Naive thymus-derived CD4-positive, alpha-beta T cell (primary cell): ENCODE measurements at regions of chr13 and their contacts with region 1.

Region 1: GRCh38 chr13:28718543-28719226 is at the start of gene SLC46A3:
- DNase-seq: peak; percentile 94 to 97 (median 96)
- ATAC-seq: peak; percentile 99
- H3K4me3 ChIP-seq: peak within 1 kb of the TSS; percentile 81
- H3K4me3 Mint-ChIP-seq: peak within 1 kb of the TSS; percentile 89 to 97 (median 95)
- H3K27ac ChIP-seq: peak within 1 kb of the TSS; percentile 78
- H3K27ac Mint-ChIP-seq: peak within 1 kb of the TSS; percentile 90 to 97 (median 95)
- H3K4me1 ChIP-seq: peaks cover 11 to 14% of the 10 kb centered on the region in 2 donors
- H3K4me1 Mint-ChIP-seq: peaks cover 27 to 48% (median 38%) of the 10 kb centered on the region in 7 donors
- H3K27me3 ChIP-seq: no peaks in the 10 kb centered on the region
- H3K27me3 Mint-ChIP-seq: peaks cover 0 to 10% (median 0%) of the 10 kb centered on the region in 5 donors
- total RNA-seq, gene SLC46A3: 11.1 to 23.6 (median 12.0) TPM

Region 2: DNA sequence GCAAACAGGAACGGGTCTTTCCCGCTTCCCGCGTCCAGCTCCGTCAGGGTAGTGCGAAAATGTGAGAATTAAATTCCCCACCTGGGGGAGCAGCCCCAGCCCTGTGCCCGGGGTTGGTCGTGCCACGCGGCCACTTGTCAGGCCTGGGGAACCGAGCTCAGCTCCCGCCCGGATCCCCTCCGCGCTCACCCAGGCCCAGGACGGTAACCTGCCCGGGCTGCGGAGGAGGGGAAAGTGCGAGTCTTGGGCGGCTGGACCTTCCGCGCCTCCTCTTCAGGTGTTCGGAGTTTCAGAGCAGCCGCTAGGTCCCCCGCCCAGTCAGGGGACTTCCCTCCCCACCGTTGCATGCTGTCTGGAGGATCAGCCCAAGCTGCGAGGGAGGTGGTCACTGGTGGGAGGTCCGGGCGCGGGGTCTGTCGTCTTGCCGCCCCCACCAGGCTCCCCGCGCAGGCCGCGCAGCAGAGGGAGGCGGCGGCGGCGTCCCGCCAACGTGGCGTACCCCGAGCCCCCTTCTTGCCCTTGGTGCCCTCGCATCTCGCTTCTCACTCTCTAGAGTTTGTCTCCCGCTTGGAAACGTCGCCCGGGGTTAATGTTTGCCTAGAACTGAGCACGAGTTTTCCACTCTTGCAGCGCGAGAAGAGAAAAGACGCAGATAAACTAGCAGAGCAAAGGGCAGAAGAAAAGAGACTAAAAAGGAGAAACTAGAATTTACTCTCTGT is 738.2 kb before region 1 on chr13:
- CTCF ChIA-PET with region 1: no interaction called
- POLR2A ChIA-PET with region 1: no interaction called
- intact Hi-C with region 1: no loop called
- DNase-seq: no peak
- ATAC-seq: no peak
- H3K4me3 ChIP-seq: no peak overlapping the region
- H3K4me3 Mint-ChIP-seq: peak overlapping the region in 8 of 10 donors; percentile 17 to 68 (median 40)
- H3K27ac ChIP-seq: no peak overlapping the region
- H3K27ac Mint-ChIP-seq: no peak overlapping the region
- H3K4me1 ChIP-seq: no peaks in the 10 kb centered on the region
- H3K4me1 Mint-ChIP-seq: peaks cover 10 to 33% (median 25%) of the 10 kb centered on the region in 7 donors
- H3K27me3 ChIP-seq: peaks cover 13 to 17% of the 10 kb centered on the region in 2 donors
- H3K27me3 Mint-ChIP-seq: peaks cover 73 to 84% (median 77%) of the 10 kb centered on the region in 5 donors

Region 3: GRCh38 chr13:28355822-28356371 is 362.8 kb before region 1 on chr13:
- CTCF ChIA-PET with region 1: no interaction called
- POLR2A ChIA-PET with region 1: no interaction called
- intact Hi-C with region 1: loop called in 1 of 2 experiments (anchors 5 kb)
- DNase-seq: peak in 2 of 9 donors; percentile 2 to 20
- ATAC-seq: peak; percentile 65
- H3K4me3 ChIP-seq: no peak overlapping the region
- H3K4me3 Mint-ChIP-seq: peak overlapping the region in 3 of 10 donors; percentile 35 to 77 (median 39)
- H3K27ac ChIP-seq: no peak overlapping the region
- H3K27ac Mint-ChIP-seq: peak overlapping the region in 1 of 9 donors; percentile 84
- H3K4me1 ChIP-seq: peaks cover 0 to 12% of the 10 kb centered on the region in 2 donors
- H3K4me1 Mint-ChIP-seq: peaks cover 9 to 47% (median 31%) of the 10 kb centered on the region in 7 donors
- H3K27me3 ChIP-seq: no peaks in the 10 kb centered on the region
- H3K27me3 Mint-ChIP-seq: peaks cover 0 to 4% (median 0%) of the 10 kb centered on the region in 5 donors

Region 4: GRCh38 chr13:28658796-28659620 is 59.7 kb before region 1 on chr13 and contains the start of gene POMP:
- CTCF ChIA-PET with region 1: no interaction called
- POLR2A ChIA-PET with region 1: interaction called, 20 read pairs
- intact Hi-C with region 1: loop called (anchors 1 kb)
- DNase-seq: peak; percentile 83 to 96 (median 93)
- ATAC-seq: peak; percentile 95
- H3K4me3 ChIP-seq: peak within 1 kb of the TSS; percentile 86
- H3K4me3 Mint-ChIP-seq: peak within 1 kb of the TSS; percentile 88 to 100 (median 98)
- H3K27ac ChIP-seq: peak within 1 kb of the TSS; percentile 96
- H3K27ac Mint-ChIP-seq: peak within 1 kb of the TSS; percentile 94 to 99 (median 99)
- H3K4me1 ChIP-seq: peaks cover 25 to 29% of the 10 kb centered on the region in 2 donors
- H3K4me1 Mint-ChIP-seq: peaks cover 38 to 84% (median 69%) of the 10 kb centered on the region in 7 donors
- H3K27me3 ChIP-seq: no peaks in the 10 kb centered on the region
- H3K27me3 Mint-ChIP-seq: no peaks in the 10 kb centered on the region
- total RNA-seq, gene POMP: 18.8 to 97.0 (median 21.2) TPM

Region 5: GRCh38 chr13:28707629-28708427 is 10.9 kb before region 1 on chr13:
- CTCF ChIA-PET with region 1: no interaction called
- POLR2A ChIA-PET with region 1: interaction called, 4 read pairs
- intact Hi-C with region 1: loop called in 1 of 2 experiments (anchors 1 kb)
- DNase-seq: no peak
- ATAC-seq: peak; percentile 64
- H3K4me3 ChIP-seq: no peak overlapping the region
- H3K4me3 Mint-ChIP-seq: peak overlapping the region in 1 of 10 donors; percentile 9
- H3K27ac ChIP-seq: no peak overlapping the region
- H3K27ac Mint-ChIP-seq: peak overlapping the region in 2 of 9 donors; percentile 33 to 60
- H3K4me1 ChIP-seq: no peaks in the 10 kb centered on the region
- H3K4me1 Mint-ChIP-seq: peaks cover 0 to 11% (median 3%) of the 10 kb centered on the region in 7 donors
- H3K27me3 ChIP-seq: no peaks in the 10 kb centered on the region
- H3K27me3 Mint-ChIP-seq: no peaks in the 10 kb centered on the region